Right cardiac atrium (tissue), 5 donors: ENCODE measurements at regions of chr20 and their contacts with region 1.

Region 1: DNA sequence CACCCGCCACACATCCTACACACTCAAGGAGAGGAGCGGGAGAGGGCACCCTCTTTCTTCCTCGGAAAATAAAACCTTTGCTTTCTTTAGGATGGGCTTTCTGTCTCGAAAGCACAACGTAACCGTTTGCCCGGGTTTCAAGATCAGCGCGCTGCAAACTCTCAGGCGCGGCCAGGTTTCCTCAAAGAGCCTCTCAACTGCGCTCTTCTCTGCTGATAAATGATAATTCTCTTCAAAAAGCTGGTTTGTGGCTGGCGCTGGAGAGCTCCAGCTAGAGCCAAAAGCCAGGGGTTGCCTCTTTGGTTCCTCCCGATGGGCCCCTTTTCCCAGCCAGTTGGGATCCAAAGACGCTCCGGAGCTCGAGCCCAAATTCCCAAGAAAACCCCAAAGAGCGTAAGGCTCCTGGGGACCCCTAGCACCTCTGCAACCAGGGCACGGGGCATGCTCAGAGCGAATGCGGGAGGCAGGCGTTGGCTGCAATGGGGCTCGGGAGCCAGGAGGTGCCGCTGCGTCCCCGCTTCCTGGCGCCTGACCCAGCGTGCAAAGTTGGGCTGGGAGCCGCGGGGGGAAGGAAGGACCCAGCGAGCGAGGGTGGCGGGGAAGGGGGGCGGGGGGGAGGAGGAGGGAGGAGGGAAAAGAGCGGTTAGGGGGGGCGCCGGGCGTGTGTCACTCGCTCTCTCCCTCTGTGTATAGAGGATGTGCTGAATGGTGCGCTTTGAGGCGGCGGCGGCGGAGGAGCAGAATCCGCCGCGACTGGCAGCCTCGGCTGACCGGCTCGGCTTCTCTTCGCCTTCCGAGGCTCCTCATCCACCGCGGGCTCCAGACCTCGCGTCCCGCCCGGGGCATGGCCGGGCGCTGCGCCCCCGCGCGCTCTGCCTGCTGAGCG is at the start of gene PLCB1:
- DNase-seq: peak; percentile 89 to 96 (median 96)
- ATAC-seq: peak; percentile 92 to 95
- H3K4me3 ChIP-seq: peak within 1 kb of the TSS; percentile 88
- H3K27ac ChIP-seq: peak within 1 kb of the TSS; percentile 33
- H3K4me1 ChIP-seq: no peaks in the 10 kb centered on the region
- H3K27me3 ChIP-seq: no peaks in the 10 kb centered on the region
- total RNA-seq, gene PLCB1: 11.4 to 20.3 (median 14.1) TPM

Region 2: GRCh38 chr20:7765221-7765620 is 366.6 kb before region 1 on chr20:
- intact Hi-C with region 1: no loop called
- DNase-seq: no peak
- ATAC-seq: no peak
- H3K4me3 ChIP-seq: no peak overlapping the region
- H3K27ac ChIP-seq: no peak overlapping the region
- H3K4me1 ChIP-seq: no peaks in the 10 kb centered on the region
- H3K27me3 ChIP-seq: no peaks in the 10 kb centered on the region

Region 3: GRCh38 chr20:8043687-8044282 is 88.1 kb before region 1 on chr20:
- intact Hi-C with region 1: loop called in 2 of 4 experiments (anchors 5 to 10 kb)
- DNase-seq: peak in 1 of 3 donors; percentile 36
- ATAC-seq: peak; percentile 47 to 68
- H3K4me3 ChIP-seq: no peak overlapping the region
- H3K27ac ChIP-seq: no peak overlapping the region
- H3K4me1 ChIP-seq: no peaks in the 10 kb centered on the region
- H3K27me3 ChIP-seq: no peaks in the 10 kb centered on the region

Region 4: GRCh38 chr20:8299921-8300320 is 168.1 kb after region 1 on chr20:
- intact Hi-C with region 1: loop called in 1 of 4 experiments (anchors 5 kb)
- DNase-seq: no peak
- ATAC-seq: no peak
- H3K4me3 ChIP-seq: no peak overlapping the region
- H3K27ac ChIP-seq: no peak overlapping the region
- H3K4me1 ChIP-seq: peaks cover 2% of the 10 kb centered on the region
- H3K27me3 ChIP-seq: no peaks in the 10 kb centered on the region

Region 5: GRCh38 chr20:8389381-8390036 is 257.7 kb after region 1 on chr20:
- intact Hi-C with region 1: loop called (anchors 2 to 5 kb)
- DNase-seq: no peak
- ATAC-seq: peak; percentile 41 to 61
- H3K4me3 ChIP-seq: no peak overlapping the region
- H3K27ac ChIP-seq: no peak overlapping the region
- H3K4me1 ChIP-seq: peaks cover 3% of the 10 kb centered on the region
- H3K27me3 ChIP-seq: no peaks in the 10 kb centered on the region